HepG2 (cell line): ENCODE measurements at regions of chr6 and their contacts with region 1.

Region 1: DNA sequence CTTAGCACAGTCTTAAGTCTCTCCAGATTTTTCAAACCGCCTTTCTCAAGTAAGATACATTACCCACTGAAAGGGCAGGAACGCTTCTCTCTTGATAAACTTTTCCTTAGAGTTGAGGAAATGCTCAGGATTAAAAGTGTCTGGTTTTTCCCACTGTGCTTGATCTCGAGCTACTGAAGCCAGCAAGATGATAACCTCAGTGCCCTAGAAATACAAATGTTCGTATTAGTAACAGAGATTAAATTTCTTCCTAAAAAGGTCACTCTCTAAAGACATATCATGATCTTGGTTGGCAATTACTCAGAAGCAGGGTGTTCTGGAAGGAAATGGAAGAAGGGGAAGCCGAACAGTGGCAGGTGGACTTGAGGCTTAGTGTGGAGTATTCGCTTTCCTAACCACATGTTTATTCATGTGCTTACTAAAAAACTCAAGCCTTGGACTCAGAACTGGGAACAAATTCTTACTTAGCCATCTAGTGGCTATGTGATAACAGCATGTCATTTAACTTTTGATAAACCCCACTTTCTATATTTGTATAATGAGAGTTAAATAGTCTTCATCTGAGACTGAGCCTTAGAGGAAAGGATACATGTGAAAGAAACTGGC is 20.1 kb downstream of the C6orf141 start:
- DNase-seq: peak; percentile 37
- ATAC-seq: peak; percentile 69
- H3K4me3 ChIP-seq: no peak overlapping the region
- H3K27ac ChIP-seq: no peak overlapping the region
- H3K4me1 ChIP-seq: peaks cover 31% of the 10 kb centered on the region
- H3K27me3 ChIP-seq: no peaks in the 10 kb centered on the region
- CTCF ChIP-seq: peak; percentile 14; the same call in 1 of the 2 replicates
- EP300 ChIP-seq: no peak
- POLR2A ChIP-seq: no peak
- RAD21 ChIP-seq: no peak

Region 2: DNA sequence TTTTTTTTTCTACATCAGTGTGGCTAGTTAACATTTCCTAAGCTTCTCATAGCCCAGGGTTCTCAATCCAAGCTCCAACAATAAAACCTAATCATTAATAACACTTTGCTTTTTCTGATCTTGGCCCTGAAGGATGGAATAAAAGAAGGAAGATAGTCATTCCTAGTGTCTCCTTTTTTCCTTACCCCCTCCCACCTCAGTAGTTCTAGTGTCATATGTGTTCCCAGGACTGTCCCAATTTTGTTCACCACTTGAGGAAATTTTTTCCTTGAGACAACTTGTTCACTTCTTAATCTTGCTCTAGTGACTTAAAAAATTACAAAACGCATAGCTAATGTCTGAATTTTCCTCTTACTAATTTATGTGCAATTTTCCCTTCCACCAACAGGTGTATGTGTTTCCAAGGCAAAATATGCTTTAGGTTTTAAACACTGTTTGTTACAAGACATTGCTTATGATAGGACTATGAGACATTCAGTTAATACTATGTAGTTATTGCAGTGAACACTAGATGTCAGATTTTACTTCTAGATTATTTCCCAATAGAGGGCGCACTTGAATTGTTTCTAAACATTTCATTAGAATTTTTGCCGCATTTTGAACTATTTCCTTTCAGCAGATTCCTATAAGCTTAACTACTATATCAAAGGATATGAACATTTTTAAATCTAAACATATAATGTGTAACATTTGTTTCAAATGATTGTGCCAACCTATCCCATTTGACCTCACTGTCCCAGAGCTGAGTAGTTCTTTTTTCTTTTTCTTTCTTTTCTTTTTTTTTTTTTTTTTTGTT is 38.6 kb before region 1 on chr6:
- CTCF ChIA-PET with region 1: interaction called, 6 read pairs
- POLR2A ChIA-PET with region 1: no interaction called
- in situ Hi-C with region 1: no loop called
- intact Hi-C with region 1: loop called (anchors 5 kb)
- DNase-seq: peak; percentile 72
- ATAC-seq: peak; percentile 98
- H3K4me3 ChIP-seq: peak overlapping the region; percentile 24 to 41 (median 40)
- H3K27ac ChIP-seq: no peak overlapping the region
- H3K4me1 ChIP-seq: peaks cover 16% of the 10 kb centered on the region
- H3K27me3 ChIP-seq: no peaks in the 10 kb centered on the region
- CTCF ChIP-seq: peak; percentile 83
- EP300 ChIP-seq: peak in 1 of 2 experiments; percentile 3; a peak in 1 of 4 replicates
- POLR2A ChIP-seq: no peak
- RAD21 ChIP-seq: peak; percentile 85

Region 3: GRCh38 chr6:49636713-49637349 is 66.3 kb after region 1 on chr6 and contains the start of gene RHAG:
- CTCF ChIA-PET with region 1: no interaction called
- POLR2A ChIA-PET with region 1: no interaction called
- in situ Hi-C with region 1: no loop called
- intact Hi-C with region 1: no loop called
- DNase-seq: no peak
- ATAC-seq: no peak
- H3K4me3 ChIP-seq: no peak within 1 kb of the TSS
- H3K27ac ChIP-seq: no peak within 1 kb of the TSS
- H3K4me1 ChIP-seq: peaks cover 15% of the 10 kb centered on the region
- H3K27me3 ChIP-seq: no peaks in the 10 kb centered on the region
- CTCF ChIP-seq: no peak
- EP300 ChIP-seq: no peak
- POLR2A ChIP-seq: no peak
- RAD21 ChIP-seq: no peak
- total RNA-seq, gene RHAG: not detected in 2 replicates

Region 4: DNA sequence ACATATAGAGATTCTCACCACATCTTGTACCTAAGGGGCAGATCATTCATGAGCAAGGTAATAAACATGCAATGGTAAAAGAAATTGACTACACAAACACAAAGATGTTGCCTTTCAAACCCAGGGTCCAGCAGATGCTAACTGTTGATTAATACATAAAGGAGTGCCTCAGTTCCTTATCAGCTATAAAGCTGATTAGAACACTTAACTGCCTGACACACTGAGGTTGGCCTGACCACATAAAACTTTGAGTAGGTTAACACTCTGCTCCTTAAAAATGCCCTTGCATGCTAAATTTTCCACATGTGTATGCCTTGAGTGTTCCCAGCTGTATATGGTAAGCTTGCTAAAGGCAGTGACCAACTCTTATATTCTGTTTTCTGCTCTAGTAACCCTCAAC is 127.9 kb after region 1 on chr6:
- CTCF ChIA-PET with region 1: no interaction called
- POLR2A ChIA-PET with region 1: no interaction called
- in situ Hi-C with region 1: no loop called
- intact Hi-C with region 1: no loop called
- DNase-seq: no peak
- ATAC-seq: no peak
- H3K4me3 ChIP-seq: no peak overlapping the region
- H3K27ac ChIP-seq: no peak overlapping the region
- H3K4me1 ChIP-seq: no peaks in the 10 kb centered on the region
- H3K27me3 ChIP-seq: no peaks in the 10 kb centered on the region
- CTCF ChIP-seq: no peak
- EP300 ChIP-seq: no peak
- POLR2A ChIP-seq: no peak
- RAD21 ChIP-seq: no peak

Region 5: DNA sequence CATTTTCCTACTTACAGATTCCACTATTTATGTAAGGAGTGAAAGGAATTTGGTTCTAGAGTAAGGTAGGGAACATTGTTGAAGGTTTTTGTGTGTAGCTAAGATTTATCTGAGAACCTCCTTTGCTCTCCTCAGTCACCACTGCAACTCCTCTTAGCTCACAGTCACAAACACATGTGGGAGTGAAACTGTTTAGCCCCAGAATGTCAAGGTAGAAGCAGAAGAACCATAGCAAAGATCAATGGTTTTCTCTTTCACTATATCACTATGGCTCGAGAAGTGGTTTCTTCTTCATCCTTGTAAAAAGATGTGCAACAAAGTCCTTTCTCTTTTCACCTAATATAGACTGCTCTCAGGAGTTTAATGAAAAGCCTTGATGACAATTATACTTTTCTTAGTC is 485.7 kb after region 1 on chr6:
- CTCF ChIA-PET with region 1: no interaction called
- POLR2A ChIA-PET with region 1: no interaction called
- in situ Hi-C with region 1: no loop called
- intact Hi-C with region 1: no loop called
- DNase-seq: no peak
- ATAC-seq: no peak
- H3K4me3 ChIP-seq: no peak overlapping the region
- H3K27ac ChIP-seq: no peak overlapping the region
- H3K4me1 ChIP-seq: no peaks in the 10 kb centered on the region
- H3K27me3 ChIP-seq: no peaks in the 10 kb centered on the region
- CTCF ChIP-seq: no peak
- EP300 ChIP-seq: no peak
- POLR2A ChIP-seq: no peak
- RAD21 ChIP-seq: no peak